HEK293 (cell line): ENCODE measurements at regions of chr4 and their contacts with region 1.

Region 1: DNA sequence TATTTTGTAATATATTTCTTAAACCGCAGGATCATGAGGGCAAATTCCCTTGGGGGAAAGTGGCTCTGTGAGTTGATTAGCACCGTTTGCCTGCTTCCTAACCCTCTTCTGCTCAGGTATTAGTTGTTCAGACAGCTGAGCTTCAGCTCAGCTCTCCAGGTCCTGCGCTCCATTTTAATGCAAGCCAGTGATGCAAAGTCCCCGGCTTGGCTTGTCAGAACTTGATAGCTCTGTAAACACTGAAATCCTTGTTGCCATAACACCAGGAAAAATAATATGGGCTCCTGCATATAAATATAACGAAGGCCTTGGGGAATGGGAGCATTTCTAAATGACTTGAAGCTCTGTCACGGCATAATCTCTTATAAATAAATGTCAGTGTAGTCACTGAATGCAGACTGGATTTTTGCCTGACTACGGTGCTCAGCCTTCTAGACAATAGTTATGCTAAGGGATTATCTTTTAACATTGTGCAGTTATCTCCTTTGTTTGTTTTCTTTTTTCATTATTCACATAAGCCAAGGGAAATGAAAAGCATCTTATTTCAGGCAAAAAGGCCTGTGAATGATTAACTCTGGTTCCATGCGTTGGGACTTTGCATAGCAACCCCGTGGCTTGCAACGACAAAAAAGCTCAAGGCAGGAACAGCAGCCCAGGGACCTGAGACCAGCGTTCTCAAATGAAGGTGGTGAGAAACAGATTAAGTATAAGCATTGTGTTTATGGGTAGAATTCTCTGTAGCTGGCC is 253.2 kb downstream of the SPRY1 start:
- H3K4me3 ChIP-seq: no peak overlapping the region
- H3K27ac ChIP-seq: peak overlapping the region; percentile 71
- H3K4me1 ChIP-seq: peaks cover 4% of the 10 kb centered on the region; the same call in 1 of the 2 replicates
- CTCF ChIP-seq: no peak

Region 2: GRCh38 chr4:123393721-123394120 is 256.1 kb before region 1 on chr4:
- CTCF ChIA-PET with region 1: interaction called, 10 read pairs
- POLR2A ChIA-PET with region 1: no interaction called
- H3K4me3 ChIP-seq: no peak overlapping the region
- H3K27ac ChIP-seq: no peak overlapping the region
- H3K4me1 ChIP-seq: no peaks in the 10 kb centered on the region
- CTCF ChIP-seq: no peak